ENCODE measurements at regions of chr10 and their contacts with region 1.

Region 1: DNA sequence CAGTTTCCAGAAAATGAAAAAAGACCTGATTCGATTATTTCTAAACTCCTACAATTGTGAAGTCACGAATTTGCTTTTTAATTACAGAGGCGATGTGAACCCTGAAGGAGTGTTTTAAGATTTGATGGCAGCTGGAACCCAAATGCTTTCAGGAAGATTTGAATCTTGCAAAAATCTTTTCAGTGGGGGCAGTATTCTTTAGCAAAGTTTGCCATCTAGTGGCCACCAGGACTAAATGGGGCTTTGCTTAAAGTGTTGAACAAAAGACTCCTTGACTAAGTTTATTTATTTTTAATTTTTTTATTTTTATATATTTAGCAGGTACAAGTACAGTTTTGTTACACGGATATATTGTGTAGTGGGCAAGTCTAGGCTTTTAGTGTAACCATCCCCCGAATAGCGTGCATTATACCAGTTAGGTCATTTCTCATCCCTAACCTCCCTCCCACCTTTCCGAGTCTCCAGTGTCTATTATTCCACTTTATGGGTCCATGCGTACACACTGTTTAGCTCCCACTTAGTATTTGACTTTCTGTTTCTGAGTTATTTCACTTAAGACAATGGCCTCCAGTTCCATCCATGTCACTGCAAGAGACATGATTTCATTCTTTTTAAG is 98.8 kb downstream of the CACNB2 start:
- DNase-seq: no peak
- ATAC-seq: peak in 1 of 8 donors; percentile 15
- H3K4me3 ChIP-seq: no peak overlapping the region
- H3K27ac ChIP-seq: peak overlapping the region in 1 of 10 donors; percentile 26
- H3K4me1 ChIP-seq: peaks cover 0 to 16% (median 0%) of the 10 kb centered on the region in 9 donors
- H3K27me3 ChIP-seq: peaks cover 0 to 3% (median 0%) of the 10 kb centered on the region in 7 donors
- CTCF ChIP-seq: peak; percentile 29 to 75 (median 64)

Region 2: GRCh38 chr10:17737027-17737965 is 501.7 kb before region 1 on chr10:
- intact Hi-C with region 1: loop called in 3 of 10 experiments (anchors 10 kb)
- DNase-seq: peak; percentile 29 to 53
- ATAC-seq: peak in 7 of 8 donors; percentile 29 to 59 (median 43)
- H3K4me3 ChIP-seq: no peak overlapping the region
- H3K27ac ChIP-seq: peak overlapping the region in 7 of 10 donors; percentile 11 to 78 (median 29)
- H3K4me1 ChIP-seq: peaks cover 4 to 35% (median 19%) of the 10 kb centered on the region in 9 donors
- H3K27me3 ChIP-seq: no peaks in the 10 kb centered on the region
- CTCF ChIP-seq: peak; percentile 23 to 77 (median 67)

Region 3: DNA sequence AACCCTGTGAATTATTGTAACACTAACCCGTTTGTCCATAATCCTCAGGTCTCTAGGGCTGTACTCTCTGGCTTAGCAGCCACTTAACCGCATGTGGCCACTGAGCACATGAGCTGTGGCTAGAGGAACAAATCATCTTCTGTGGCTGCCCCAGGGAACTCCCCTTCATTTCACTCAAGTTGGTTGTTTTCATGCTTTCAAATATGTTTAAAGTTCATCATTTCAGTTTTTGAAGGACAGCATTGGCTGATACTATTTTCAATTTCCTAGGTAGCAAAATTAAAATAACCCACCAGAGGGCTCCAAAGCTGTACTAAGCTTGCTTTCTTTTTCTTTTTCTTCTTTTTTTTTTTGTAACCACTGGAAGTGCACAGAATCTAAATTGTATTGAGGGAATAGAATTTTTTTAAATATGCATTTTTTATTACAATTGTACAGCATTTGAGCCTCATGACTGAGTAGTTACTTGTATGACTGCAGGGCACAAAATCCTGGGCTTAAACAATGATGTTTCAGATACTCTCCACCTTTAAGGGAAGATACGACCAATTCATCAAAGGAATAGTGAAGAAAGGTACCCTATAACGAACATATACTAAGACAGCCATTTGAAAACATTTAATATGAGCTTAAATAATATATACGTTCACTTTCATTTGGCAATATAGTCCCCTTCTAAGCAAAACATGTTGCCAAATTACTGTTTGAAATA is 391.2 kb before region 1 on chr10:
- intact Hi-C with region 1: loop called in 1 of 10 experiments (anchors 5 kb)
- DNase-seq: no peak
- ATAC-seq: peak in 5 of 8 donors; percentile 35 to 51 (median 42)
- H3K4me3 ChIP-seq: no peak overlapping the region
- H3K27ac ChIP-seq: no peak overlapping the region
- H3K4me1 ChIP-seq: peaks cover 0 to 30% (median 0%) of the 10 kb centered on the region in 9 donors
- H3K27me3 ChIP-seq: no peaks in the 10 kb centered on the region
- CTCF ChIP-seq: peak in 8 of 9 donors; percentile 14 to 63 (median 50)

Region 4: DNA sequence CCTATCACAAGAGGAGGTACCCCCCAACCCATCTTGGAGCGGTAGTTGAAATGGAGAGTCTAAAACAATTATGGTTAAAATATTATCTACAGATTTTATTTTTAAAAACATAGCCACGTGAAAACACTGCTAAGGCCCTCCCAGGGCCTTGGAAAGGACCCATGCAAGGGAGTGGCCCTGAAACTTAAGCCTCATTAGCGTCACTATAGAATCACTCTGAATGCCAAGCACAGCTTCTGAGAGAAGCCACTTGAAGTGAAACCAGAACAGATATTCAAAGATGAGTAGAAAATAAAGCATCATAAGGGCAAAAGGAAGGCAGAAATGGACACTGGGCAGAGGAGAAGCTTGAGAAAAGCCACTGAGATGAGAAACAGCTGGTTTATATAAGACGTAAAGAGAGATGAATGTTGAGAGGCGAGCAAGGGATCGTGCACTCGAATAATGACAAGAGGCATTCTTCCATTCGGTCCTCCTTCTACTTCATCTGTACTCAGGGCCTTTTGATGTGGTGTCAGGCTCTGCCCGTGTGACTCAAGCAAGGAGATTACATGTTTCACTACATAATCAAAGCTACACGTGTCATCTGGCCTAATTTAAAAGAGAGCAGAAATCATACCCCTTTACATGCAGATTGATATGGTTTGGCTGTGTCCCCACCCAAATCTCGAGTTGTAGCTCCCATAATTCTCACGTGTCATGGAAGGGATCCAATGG is 320.6 kb before region 1 on chr10:
- intact Hi-C with region 1: no loop called
- DNase-seq: no peak
- ATAC-seq: no peak
- H3K4me3 ChIP-seq: no peak overlapping the region
- H3K27ac ChIP-seq: peak overlapping the region in 1 of 10 donors; percentile 40
- H3K4me1 ChIP-seq: peaks cover 0 to 16% (median 8%) of the 10 kb centered on the region in 9 donors
- H3K27me3 ChIP-seq: no peaks in the 10 kb centered on the region
- CTCF ChIP-seq: no peak

Region 5: DNA sequence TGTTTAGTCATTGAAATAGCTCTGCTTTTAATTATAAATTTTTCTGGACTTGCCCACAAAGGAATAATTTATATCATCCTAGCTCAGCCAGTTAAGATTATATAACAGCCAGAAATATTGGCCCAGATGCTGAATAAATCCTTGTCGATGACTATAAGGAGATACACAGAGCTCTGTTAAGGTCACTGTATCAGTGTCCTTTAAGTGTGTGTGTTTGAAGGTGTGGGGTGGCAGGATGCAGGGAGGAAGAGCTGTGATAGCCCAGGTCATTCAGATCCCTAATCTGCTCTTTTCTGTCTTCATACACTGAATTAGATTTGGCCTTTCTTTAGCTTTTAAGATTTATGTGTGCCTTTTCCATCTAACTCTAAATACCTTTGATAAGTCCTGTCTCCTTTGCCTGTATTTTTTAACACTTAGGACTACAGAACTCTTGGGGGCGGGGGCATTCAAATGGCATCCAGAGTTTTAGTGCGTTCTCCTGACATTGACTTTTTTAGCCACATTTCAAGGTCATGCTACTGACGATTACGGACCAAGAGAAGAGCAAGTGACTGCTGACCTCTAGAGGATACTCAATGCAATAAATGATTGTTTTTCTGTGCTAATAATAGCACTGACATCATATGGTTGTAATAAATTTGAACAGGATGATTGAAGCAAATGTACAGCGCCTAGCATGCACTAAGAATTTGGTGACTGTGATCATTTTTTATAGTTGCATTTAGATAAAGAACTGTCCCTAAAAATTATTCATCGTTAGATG is 73.6 kb after region 1 on chr10:
- intact Hi-C with region 1: loop called in 4 of 10 experiments (anchors 5 kb)
- DNase-seq: peak in 1 of 2 donors; percentile 29
- ATAC-seq: peak; percentile 68 to 84 (median 80)
- H3K4me3 ChIP-seq: peak overlapping the region in 1 of 10 donors; percentile 6
- H3K27ac ChIP-seq: peak overlapping the region; percentile 6 to 88 (median 84)
- H3K4me1 ChIP-seq: peaks cover 0 to 38% (median 8%) of the 10 kb centered on the region in 9 donors
- H3K27me3 ChIP-seq: no peaks in the 10 kb centered on the region
- CTCF ChIP-seq: peak in 7 of 9 donors; percentile 40 to 65 (median 53)

Measured in heart right ventricle (tissue), 16 donors.